ENCODE measurements at regions of chr14 and their contacts with region 1.

Region 1: DNA sequence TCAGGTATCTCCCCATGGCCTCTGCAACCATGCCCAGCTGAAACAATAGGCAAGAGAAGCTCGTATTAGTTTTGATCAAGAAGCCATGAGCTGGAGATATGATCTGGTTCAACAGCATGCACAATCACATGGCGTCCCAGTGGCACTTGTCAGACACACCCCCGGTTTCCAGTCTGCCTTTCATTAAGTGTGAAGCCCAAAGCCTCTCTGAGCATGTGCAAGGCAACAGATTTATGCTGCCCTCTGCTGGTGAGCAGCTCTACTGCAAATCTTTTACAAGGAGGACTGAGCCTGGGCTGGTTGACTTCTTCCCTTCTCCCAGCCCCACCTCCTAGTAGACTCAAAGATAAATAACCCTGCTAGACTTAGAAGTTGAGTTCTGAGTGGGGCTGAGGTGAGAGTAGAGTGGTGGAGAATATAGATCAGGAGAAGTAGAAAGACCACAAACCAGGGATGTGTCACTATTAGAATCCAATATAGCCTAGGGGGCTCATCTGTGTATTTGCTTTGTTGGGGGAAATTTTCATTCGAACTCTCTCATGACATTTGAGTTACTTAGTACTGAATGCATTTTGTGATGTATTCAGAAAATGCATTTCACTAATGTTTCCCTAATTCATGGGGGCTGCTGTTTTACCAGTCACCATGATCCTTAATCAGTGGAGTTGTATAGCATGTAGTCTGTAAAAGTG is 53.7 kb upstream of the MBIP start:
- DNase-seq: peak; percentile 83
- H3K4me3 ChIP-seq: no peak overlapping the region
- H3K27ac ChIP-seq: no peak overlapping the region
- H3K4me1 ChIP-seq: no peaks in the 10 kb centered on the region
- H3K27me3 ChIP-seq: no peaks in the 10 kb centered on the region
- CTCF ChIP-seq: peak; percentile 70 to 83 (median 76)
- EP300 ChIP-seq: no peak
- POLR2A ChIP-seq: no peak

Region 2: DNA sequence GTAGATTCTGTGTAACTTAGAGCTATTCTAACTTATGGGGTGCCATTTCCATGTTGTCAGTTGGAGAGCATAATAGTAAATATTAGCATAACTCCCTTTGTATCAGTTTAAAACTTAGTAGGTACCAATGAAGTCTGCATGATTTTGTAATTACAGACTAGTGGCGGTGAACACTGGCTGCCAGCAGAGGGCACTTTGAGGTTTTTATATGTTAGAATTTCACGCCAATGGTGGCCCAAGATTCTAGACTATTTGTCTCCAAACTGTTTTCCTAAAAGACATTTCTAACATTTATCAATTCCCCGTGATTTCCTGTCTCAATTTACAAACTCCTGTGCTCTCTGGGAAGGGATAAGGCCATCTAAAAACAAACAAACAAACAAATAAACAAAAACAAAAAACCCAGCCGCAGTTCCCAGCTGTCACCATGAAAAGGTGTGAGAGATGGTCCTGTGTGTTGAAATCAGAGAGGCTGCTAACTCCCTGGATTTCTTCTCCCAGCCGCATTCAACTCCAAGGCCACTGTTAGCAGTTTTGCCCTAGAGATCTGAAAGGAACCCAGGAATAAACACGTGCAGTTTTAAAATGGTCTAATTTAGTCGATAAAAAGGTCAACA is 490.3 kb before region 1 on chr14:
- in situ Hi-C with region 1: loop called in 1 of 4 experiments (anchors 25 kb)
- intact Hi-C with region 1: no loop called
- DNase-seq: peak; percentile 29
- H3K4me3 ChIP-seq: no peak overlapping the region
- H3K27ac ChIP-seq: no peak overlapping the region
- H3K4me1 ChIP-seq: peaks cover 0 to 10% (median 2%) of the 10 kb centered on the region in 4 donors
- H3K27me3 ChIP-seq: no peaks in the 10 kb centered on the region
- CTCF ChIP-seq: peak; percentile 51 to 57 (median 54)
- EP300 ChIP-seq: no peak
- POLR2A ChIP-seq: no peak

Region 3: GRCh38 chr14:36028218-36028617 is 345.9 kb before region 1 on chr14:
- in situ Hi-C with region 1: no loop called
- intact Hi-C with region 1: no loop called
- DNase-seq: no peak
- H3K4me3 ChIP-seq: no peak overlapping the region
- H3K27ac ChIP-seq: no peak overlapping the region
- H3K4me1 ChIP-seq: no peaks in the 10 kb centered on the region
- H3K27me3 ChIP-seq: no peaks in the 10 kb centered on the region
- CTCF ChIP-seq: no peak
- EP300 ChIP-seq: no peak
- POLR2A ChIP-seq: no peak

Region 4: DNA sequence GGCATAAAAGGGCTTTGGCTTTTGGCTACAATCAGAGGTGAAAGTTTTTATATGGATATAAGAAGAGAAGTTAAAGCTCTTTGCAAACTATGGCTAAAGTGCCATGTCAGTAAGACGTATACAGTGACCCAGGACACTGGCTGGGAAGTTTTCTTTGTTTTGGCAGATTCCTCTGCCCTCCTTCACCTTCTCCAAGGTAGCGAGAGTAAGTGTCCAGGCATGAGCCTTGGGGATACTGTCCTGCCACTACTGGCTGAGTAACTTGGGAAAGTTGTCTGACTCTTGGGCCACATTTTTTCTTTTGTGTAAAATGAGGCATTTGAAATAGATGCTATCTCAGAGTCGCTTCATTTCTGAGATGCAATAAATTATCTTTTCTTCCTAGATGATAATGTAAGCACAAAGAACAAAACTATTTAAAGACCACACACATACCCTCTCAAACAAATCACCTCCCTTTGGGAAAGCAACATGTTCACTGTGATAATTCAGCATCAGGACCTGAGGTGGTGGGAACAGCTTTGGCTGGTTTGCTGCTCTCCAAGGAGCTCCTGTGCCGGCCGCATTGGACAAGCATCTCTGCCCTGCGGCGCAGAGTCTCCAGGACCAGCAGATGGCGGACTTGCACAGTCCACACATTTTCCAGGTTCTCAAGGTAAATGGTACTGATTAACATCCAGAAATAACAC is 304.0 kb before region 1 on chr14:
- in situ Hi-C with region 1: loop called in 1 of 4 experiments (anchors 10 kb)
- intact Hi-C with region 1: no loop called
- DNase-seq: peak; percentile 54
- H3K4me3 ChIP-seq: no peak overlapping the region
- H3K27ac ChIP-seq: no peak overlapping the region
- H3K4me1 ChIP-seq: peaks cover 0 to 6% (median 2%) of the 10 kb centered on the region in 4 donors
- H3K27me3 ChIP-seq: peaks cover 8% of the 10 kb centered on the region
- CTCF ChIP-seq: peak; percentile 35 to 56 (median 49)
- EP300 ChIP-seq: no peak
- POLR2A ChIP-seq: no peak

Region 5: GRCh38 chr14:36207500-36207899 is 166.6 kb before region 1 on chr14:
- in situ Hi-C with region 1: loop called in 3 of 4 experiments (anchors 10 to 25 kb)
- intact Hi-C with region 1: no loop called
- DNase-seq: no peak
- H3K4me3 ChIP-seq: no peak overlapping the region
- H3K27ac ChIP-seq: no peak overlapping the region
- H3K4me1 ChIP-seq: no peaks in the 10 kb centered on the region
- H3K27me3 ChIP-seq: no peaks in the 10 kb centered on the region
- CTCF ChIP-seq: peak in 4 of 5 experiments; percentile 47 to 55 (median 48)
- EP300 ChIP-seq: no peak
- POLR2A ChIP-seq: no peak